Activated CD4-positive, alpha-beta T cell treated with anti-CD3 and anti-CD28 coated beads for 36 hours (primary cell): ENCODE measurements at regions of chr9 and their contacts with region 1.

Region 1: GRCh38 chr9:26975693-26976059 is 19.5 kb downstream of the IFT74 start:
- DNase-seq: peak; percentile 15
- ATAC-seq: no peak
- H3K4me3 Mint-ChIP-seq: no peak overlapping the region
- H3K27ac Mint-ChIP-seq: no peak overlapping the region
- H3K4me1 Mint-ChIP-seq: no peaks in the 10 kb centered on the region
- H3K27me3 Mint-ChIP-seq: no peaks in the 10 kb centered on the region

Region 2: DNA sequence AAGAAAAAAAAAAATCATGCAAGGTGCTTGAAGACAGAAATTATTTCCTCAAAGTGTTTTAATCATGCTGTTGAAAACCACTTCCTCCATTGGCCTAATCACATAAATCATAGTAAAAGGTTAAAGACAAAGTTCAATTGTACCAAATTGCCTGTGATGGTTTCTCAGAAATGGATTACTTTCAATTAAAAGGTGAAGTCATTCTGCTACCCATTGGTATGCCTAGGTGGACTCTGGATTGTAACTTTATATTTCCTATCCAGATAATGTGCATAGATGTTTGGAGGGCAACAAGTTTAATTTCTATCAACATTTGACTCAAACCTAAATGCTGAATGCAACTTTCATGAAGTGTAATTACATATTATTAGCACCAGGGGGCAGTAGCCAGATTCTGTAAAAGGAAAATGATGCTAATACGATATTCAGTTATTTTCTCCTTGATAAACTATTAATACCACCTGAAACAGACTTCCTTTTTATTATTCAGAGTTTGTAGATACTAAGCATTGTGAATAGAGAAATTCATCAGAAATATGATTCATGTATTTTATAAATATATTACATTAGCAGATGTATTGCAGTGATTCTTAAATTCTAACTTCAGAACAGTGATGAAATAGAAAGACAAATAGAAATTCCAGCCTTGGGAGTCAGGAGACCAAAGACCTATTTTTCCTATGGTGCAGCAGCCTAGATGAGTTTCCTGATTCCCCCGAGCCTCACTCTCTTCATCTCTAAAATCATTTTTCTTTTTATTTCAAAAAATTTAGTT is 231.3 kb before region 1 on chr9:
- CTCF ChIA-PET with region 1: no interaction called
- POLR2A ChIA-PET with region 1: no interaction called
- intact Hi-C with region 1: loop called (anchors 1 kb)
- DNase-seq: no peak
- ATAC-seq: no peak
- H3K4me3 Mint-ChIP-seq: no peak overlapping the region
- H3K27ac Mint-ChIP-seq: no peak overlapping the region
- H3K4me1 Mint-ChIP-seq: no peaks in the 10 kb centered on the region
- H3K27me3 Mint-ChIP-seq: peaks cover 6% of the 10 kb centered on the region

Region 3: DNA sequence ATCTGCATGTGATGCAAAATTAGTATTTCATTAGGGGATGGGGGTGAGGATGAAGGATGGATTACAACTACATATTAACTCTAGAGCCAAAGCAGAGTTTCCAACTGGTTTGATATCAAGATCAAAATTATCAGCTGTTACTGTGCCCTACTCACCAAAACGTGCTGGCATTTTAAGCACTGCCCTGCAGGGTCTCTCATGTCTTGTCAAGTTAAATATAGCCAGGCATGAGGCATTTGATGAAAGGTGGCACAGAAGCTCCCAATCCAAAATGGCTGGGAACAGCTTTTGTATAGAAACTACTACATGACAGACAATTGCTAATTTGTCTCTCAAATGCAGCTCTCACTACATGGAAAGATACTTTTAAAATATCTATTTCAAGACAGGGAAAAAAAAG is 56.0 kb before region 1 on chr9:
- CTCF ChIA-PET with region 1: no interaction called
- POLR2A ChIA-PET with region 1: no interaction called
- intact Hi-C with region 1: loop called (anchors 5 kb)
- DNase-seq: no peak
- ATAC-seq: no peak
- H3K4me3 Mint-ChIP-seq: no peak overlapping the region
- H3K27ac Mint-ChIP-seq: no peak overlapping the region
- H3K4me1 Mint-ChIP-seq: no peaks in the 10 kb centered on the region
- H3K27me3 Mint-ChIP-seq: no peaks in the 10 kb centered on the region